ENCODE measurements at regions of chr1 and their contacts with region 1.

Region 1: DNA sequence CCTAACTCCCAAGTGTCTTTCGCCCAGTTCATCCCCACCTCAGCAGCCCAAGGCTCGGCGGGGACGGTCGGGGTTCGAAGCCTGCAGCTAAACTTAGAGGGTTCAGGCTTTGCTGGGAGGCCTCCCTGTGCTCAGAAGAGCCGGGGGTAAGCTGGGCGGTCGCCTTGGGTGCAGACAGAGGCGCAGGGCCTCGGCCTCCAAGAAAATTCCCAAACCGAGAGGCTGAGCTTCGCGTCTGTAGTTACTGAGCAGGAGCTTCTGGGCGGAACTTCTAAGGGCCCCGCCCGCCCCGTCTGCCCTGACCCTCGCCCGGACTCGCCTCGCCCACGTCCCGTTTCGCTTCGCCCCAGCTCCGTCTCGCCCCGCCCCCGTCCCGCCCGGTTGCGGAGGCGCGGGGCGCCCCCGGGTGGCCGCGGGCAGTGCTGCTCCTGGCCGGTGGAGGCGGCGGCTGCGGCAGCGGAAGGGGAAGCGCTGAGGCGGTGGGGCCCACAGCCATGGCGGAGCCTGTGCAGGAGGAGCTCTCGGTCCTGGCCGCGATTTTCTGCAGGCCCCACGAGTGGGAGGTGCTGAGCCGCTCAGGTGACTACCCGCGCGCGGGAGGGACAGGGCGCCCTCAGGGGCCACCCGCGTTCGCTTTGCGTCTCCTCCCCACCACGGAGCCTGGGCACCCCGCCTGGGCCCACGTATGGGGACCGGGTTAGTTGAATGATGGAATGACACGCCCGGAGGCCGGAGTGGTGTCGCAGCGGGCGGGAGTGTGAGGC is at the start of gene RWDD3:
- DNase-seq: peak; percentile 95 to 97 (median 96)
- ATAC-seq: peak; percentile 94 to 96 (median 95)
- H3K4me3 ChIP-seq: peak within 1 kb of the TSS; percentile 73 to 95 (median 88)
- H3K27ac ChIP-seq: peak within 1 kb of the TSS; percentile 76 to 97 (median 93)
- H3K4me1 ChIP-seq: peaks cover 0 to 81% (median 46%) of the 10 kb centered on the region in 12 donors
- H3K27me3 ChIP-seq: no peaks in the 10 kb centered on the region
- CTCF ChIP-seq: peak; percentile 67 to 99 (median 96)
- POLR2A ChIP-seq: peak in 1 of 2 donors; percentile 73
- total RNA-seq, gene RWDD3: 8.9 to 24.8 (median 14.8) TPM

Region 2: DNA sequence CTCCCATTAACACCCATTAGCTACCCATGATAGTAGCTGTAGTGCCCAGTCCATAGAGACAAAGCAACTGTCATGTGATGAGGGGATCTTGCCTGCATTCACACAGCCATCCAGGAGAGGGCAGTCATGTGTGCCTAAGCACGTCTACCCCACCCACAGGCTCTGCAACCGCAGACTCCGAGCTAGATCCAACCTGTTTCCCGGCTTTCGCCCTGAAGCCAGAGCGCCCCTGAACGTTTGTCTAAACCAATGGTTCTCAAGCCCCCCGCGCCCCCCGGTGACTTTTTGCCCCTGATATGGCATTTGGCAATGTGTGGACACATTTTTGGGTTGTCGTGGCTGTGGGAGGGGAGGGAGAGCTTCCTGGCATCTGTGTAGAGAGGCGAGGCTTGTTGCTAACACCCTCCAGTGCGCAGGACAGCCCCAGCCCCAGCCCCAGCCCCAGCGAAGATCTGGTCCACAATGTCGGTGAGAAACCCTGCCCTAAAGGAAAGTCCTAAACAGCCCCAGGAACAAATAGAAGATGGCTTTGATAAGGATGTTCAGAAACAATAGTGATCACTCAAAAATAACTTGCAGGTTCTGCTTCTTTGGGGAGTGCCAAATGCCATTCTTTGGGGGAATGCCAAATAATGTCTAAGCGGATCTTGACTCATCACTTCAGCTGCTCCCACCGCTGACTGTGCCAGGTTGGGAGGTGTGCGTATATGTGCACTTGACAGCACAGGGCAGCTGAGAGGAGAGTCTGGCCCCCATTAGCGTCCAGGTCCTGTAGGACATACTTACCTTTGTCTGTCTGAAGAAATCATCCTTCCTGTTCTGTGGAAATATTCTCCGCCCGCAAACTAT is 379.2 kb before region 1 on chr1:
- intact Hi-C with region 1: loop called in 1 of 10 experiments (anchors 10 kb)
- DNase-seq: peak; percentile 84 to 90 (median 87)
- ATAC-seq: peak; percentile 89 to 95 (median 94)
- H3K4me3 ChIP-seq: peak overlapping the region in 11 of 12 donors; percentile 10 to 59 (median 50)
- H3K27ac ChIP-seq: peak overlapping the region in 10 of 12 donors; percentile 12 to 79 (median 70)
- H3K4me1 ChIP-seq: peaks cover 0 to 43% (median 17%) of the 10 kb centered on the region in 12 donors
- H3K27me3 ChIP-seq: no peaks in the 10 kb centered on the region
- CTCF ChIP-seq: peak; percentile 79 to 97 (median 90)
- POLR2A ChIP-seq: peak in 1 of 2 donors; percentile 27

Region 3: GRCh38 chr1:95084317-95085176 is 149.4 kb before region 1 on chr1:
- intact Hi-C with region 1: loop called in 4 of 10 experiments (anchors 1 to 5 kb)
- DNase-seq: no peak
- ATAC-seq: peak in 3 of 4 donors; percentile 9 to 65 (median 61)
- H3K4me3 ChIP-seq: no peak overlapping the region
- H3K27ac ChIP-seq: peak overlapping the region in 8 of 12 donors; percentile 28 to 83 (median 66)
- H3K4me1 ChIP-seq: peaks cover 0 to 32% (median 13%) of the 10 kb centered on the region in 12 donors
- H3K27me3 ChIP-seq: no peaks in the 10 kb centered on the region
- CTCF ChIP-seq: peak; percentile 35 to 63 (median 52)
- POLR2A ChIP-seq: no peak

Region 4: GRCh38 chr1:95179205-95179986 is 54.5 kb before region 1 on chr1:
- intact Hi-C with region 1: loop called in 1 of 10 experiments (anchors 5 kb)
- DNase-seq: no peak
- ATAC-seq: peak; percentile 54 to 73 (median 60)
- H3K4me3 ChIP-seq: no peak overlapping the region
- H3K27ac ChIP-seq: peak overlapping the region in 8 of 12 donors; percentile 19 to 66 (median 49)
- H3K4me1 ChIP-seq: peaks cover 0 to 20% (median 9%) of the 10 kb centered on the region in 12 donors
- H3K27me3 ChIP-seq: no peaks in the 10 kb centered on the region
- CTCF ChIP-seq: no peak
- POLR2A ChIP-seq: no peak

Measured in heart left ventricle (tissue), 16 donors.